CD4-positive, alpha-beta T cell (primary cell): ENCODE measurements at regions of chr19 and their contacts with region 1.

Region 1: GRCh38 chr19:41775360-41775695 is 20.0 kb downstream of the CEACAM6 start:
- DNase-seq: no peak
- ATAC-seq: no peak
- H3K4me3 ChIP-seq: no peak overlapping the region
- H3K4me3 Mint-ChIP-seq: no peak overlapping the region
- H3K27ac ChIP-seq: no peak overlapping the region
- H3K27ac Mint-ChIP-seq: no peak overlapping the region
- H3K4me1 ChIP-seq: peaks cover 33% of the 10 kb centered on the region
- H3K4me1 Mint-ChIP-seq: peaks cover 44% of the 10 kb centered on the region
- H3K27me3 ChIP-seq: peaks cover 7 to 27% of the 10 kb centered on the region in 2 experiments
- H3K27me3 Mint-ChIP-seq: peaks cover 93% of the 10 kb centered on the region
- CTCF ChIP-seq: no peak

Region 2: DNA sequence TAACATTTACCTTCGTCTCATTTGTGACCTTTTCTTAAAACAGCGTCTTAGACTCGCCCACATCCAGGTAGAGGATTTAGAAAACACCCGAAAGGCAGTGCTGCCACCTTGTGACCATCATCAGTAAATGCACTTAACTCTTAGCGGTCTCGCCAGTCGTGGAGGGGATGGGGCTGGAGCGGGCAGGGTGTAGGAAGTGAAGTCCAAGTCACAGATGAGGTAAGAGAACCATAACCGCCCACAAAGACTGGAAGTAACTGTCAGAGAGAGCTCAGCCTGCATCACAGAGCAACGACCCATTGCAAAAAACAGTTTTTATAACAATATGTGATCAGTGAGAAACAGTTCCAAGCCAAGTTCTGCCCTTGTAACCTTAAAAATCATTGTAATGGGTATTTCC is 10.3 kb after region 1 on chr19:
- CTCF ChIA-PET with region 1: interaction called, 3 read pairs
- POLR2A ChIA-PET with region 1: interaction called, 7 read pairs
- intact Hi-C with region 1: loop called in 1 of 2 experiments (anchors 1 kb)
- DNase-seq: peak; percentile 52 to 91 (median 66)
- ATAC-seq: peak; percentile 98
- H3K4me3 ChIP-seq: no peak overlapping the region
- H3K4me3 Mint-ChIP-seq: no peak overlapping the region
- H3K27ac ChIP-seq: no peak overlapping the region
- H3K27ac Mint-ChIP-seq: no peak overlapping the region
- H3K4me1 ChIP-seq: peaks cover 11% of the 10 kb centered on the region
- H3K4me1 Mint-ChIP-seq: peaks cover 17% of the 10 kb centered on the region
- H3K27me3 ChIP-seq: peaks cover 7 to 23% of the 10 kb centered on the region in 2 experiments
- H3K27me3 Mint-ChIP-seq: peaks cover 67% of the 10 kb centered on the region
- CTCF ChIP-seq: peak; percentile 81